ENCODE measurements at regions of chr5 and their contacts with region 1.

Region 1: GRCh38 chr5:43484106-43484849 is 613 bp upstream of the TMEM267 start:
- DNase-seq: peak; percentile 94
- ATAC-seq: peak; percentile 72
- H3K4me3 Mint-ChIP-seq: peak overlapping the region; percentile 97
- H3K27ac Mint-ChIP-seq: peak overlapping the region; percentile 100
- H3K4me1 Mint-ChIP-seq: peaks cover 38% of the 10 kb centered on the region
- H3K27me3 Mint-ChIP-seq: no peaks in the 10 kb centered on the region

Region 2: GRCh38 chr5:42927730-42928129 is 556.5 kb before region 1 on chr5:
- CTCF ChIA-PET with region 1: no interaction called
- POLR2A ChIA-PET with region 1: no interaction called
- DNase-seq: no peak
- ATAC-seq: no peak
- H3K4me3 Mint-ChIP-seq: no peak overlapping the region
- H3K27ac Mint-ChIP-seq: no peak overlapping the region
- H3K4me1 Mint-ChIP-seq: no peaks in the 10 kb centered on the region
- H3K27me3 Mint-ChIP-seq: no peaks in the 10 kb centered on the region

Region 3: DNA sequence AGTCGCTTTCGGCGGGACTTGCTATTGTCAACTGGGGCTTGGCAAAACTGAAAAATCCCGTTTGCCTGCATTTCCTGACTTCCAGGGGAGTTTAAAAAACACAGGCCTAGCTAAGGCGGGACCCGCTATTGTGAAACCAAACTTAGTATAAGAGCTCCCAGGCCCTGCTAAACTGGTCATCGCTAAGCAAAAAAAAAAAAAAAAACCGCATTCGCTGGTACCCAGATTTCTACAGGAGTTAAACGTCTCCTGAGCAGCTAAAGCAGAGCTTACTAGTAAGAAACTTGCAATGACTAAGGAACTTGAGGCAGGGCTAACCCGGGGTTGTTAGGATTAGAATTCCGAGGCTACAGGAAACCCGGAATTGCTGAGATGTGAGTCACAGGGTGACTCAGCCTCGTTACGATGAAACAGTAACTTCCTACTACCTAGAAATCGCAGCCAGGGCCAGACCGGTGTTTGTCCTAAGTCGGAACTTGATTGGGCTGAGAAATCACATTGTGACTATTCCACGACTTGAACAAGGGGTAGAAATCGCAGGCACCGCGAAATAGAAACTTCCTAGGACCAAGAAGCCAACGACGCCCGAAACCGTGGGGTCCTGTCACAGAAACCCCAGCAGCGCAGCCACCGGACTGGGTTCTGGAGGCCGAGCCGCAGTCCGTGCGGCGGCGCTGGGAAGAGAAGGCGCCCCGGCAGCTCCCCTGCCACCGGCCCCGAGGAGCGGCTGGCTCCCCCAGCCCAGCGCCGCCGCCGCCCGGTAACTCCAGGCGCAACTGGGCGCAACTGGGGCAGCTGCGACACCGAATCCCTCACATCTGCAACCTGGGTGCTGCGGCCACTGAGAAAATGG is 533.6 kb before region 1 on chr5:
- CTCF ChIA-PET with region 1: interaction called, 3 read pairs
- POLR2A ChIA-PET with region 1: interaction called, 16 read pairs
- DNase-seq: peak; percentile 73
- ATAC-seq: peak; percentile 38
- H3K4me3 Mint-ChIP-seq: peak overlapping the region; percentile 96
- H3K27ac Mint-ChIP-seq: peak overlapping the region; percentile 100
- H3K4me1 Mint-ChIP-seq: peaks cover 43% of the 10 kb centered on the region
- H3K27me3 Mint-ChIP-seq: no peaks in the 10 kb centered on the region

Region 4: GRCh38 chr5:43040287-43041098 is 443.8 kb before region 1 on chr5 and contains the start of gene ANXA2R:
- CTCF ChIA-PET with region 1: interaction called, 7 read pairs
- POLR2A ChIA-PET with region 1: interaction called, 31 read pairs
- DNase-seq: peak; percentile 97
- ATAC-seq: peak; percentile 49
- H3K4me3 Mint-ChIP-seq: peak within 1 kb of the TSS; percentile 93
- H3K27ac Mint-ChIP-seq: peak within 1 kb of the TSS; percentile 100
- H3K4me1 Mint-ChIP-seq: peaks cover 39% of the 10 kb centered on the region
- H3K27me3 Mint-ChIP-seq: no peaks in the 10 kb centered on the region
- total RNA-seq, gene ANXA2R: 28.0 to 29.3 TPM

Region 5: DNA sequence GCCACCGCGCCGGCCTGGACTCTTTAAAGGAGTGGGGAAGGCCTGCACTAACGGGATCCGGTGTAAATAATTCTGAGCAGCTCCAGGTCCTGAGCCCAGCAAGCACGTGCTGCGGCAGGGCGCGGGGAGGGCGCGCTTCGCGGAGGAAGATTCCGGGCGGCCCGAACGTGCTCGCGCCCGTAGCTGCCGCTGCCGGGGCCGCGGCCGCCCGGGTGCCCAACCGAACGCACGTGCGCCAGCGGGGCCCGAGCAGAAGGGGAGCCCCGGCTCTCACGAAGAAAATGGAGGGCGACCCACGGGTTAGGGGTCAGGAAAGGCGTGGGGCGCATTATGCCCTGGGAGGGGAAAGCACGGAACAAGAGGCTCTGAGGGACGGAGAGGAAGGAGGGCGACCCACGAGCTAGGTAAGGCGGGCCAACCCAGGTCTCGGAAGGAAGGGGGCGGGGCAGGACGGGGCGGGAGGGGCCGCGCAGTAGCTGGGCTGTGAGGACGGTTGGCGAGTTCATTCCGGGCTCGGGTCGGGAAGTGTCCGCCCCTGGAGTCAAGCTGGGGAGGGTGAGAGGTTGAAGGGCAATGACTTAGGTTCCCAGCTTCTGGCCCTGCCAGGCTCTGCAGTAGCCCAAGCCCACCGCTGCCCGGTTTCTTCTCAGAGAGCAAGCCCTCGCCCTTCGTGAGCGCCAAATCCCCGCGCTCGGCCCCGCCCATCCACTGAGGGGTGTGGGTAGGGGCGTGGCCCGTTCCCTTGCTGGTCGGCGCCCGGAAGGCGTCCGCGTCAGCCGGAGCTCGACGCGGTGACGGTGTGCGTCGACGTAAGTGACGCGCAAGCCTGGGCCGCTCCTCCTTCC is 363.3 kb before region 1 on chr5 and contains the start of gene ZNF131:
- CTCF ChIA-PET with region 1: interaction called, 27 read pairs
- POLR2A ChIA-PET with region 1: interaction called, 27 read pairs
- DNase-seq: peak; percentile 97
- ATAC-seq: peak; percentile 87
- H3K4me3 Mint-ChIP-seq: peak within 1 kb of the TSS; percentile 85
- H3K27ac Mint-ChIP-seq: peak within 1 kb of the TSS; percentile 94
- H3K4me1 Mint-ChIP-seq: peaks cover 37% of the 10 kb centered on the region
- H3K27me3 Mint-ChIP-seq: peaks cover 4% of the 10 kb centered on the region
- total RNA-seq, gene ZNF131: 45.8 to 52.8 TPM

Region 6: GRCh38 chr5:43313035-43313853 is 171.0 kb before region 1 on chr5 and contains the start of gene HMGCS1:
- CTCF ChIA-PET with region 1: interaction called, 30 read pairs
- POLR2A ChIA-PET with region 1: interaction called, 54 read pairs
- DNase-seq: peak; percentile 99
- ATAC-seq: peak; percentile 94
- H3K4me3 Mint-ChIP-seq: peak within 1 kb of the TSS; percentile 96
- H3K27ac Mint-ChIP-seq: peak within 1 kb of the TSS; percentile 95
- H3K4me1 Mint-ChIP-seq: peaks cover 62% of the 10 kb centered on the region
- H3K27me3 Mint-ChIP-seq: no peaks in the 10 kb centered on the region
- total RNA-seq, gene HMGCS1: 82.4 to 90.6 TPM

Region 7: DNA sequence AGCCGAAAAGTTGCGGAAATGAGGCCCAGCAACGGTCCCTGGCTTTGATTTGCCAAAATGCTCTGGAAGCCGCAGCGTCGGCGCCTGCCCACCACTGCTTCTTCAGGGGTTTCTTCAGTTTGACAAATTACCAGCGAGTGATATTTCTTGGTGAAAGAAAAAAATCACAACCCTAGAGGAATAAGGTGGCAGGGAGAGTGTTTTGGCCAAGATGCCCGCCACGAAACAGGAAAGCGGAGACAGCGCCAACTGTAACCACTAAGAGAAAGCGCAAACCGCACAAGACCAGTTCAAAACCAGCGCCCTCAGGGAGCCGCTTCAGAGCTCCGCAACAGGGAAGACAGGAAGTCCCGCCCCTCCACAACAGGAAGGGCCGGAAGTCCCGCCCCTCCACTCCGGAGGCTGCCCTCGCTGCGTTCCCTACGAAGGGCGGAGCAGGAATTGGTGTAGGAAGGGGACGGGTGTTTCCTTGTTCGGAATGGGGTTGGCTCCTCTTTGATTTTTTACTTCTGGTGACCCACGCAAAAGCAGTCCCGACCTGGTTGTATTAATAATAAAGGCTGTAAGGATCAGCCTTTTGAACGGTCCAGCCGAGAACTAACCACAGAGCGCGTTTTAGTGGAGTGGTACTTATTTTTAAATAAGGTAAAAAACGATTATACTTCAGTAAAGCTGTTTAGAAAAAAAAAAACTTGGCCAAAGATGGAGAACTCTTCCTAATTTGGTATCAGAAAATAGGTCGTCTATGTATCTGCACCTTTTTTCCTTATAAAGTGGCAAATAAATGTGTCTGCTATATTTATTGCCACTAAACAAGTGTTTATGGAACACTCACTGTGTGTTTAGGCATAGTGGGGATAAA is 30.8 kb after region 1 on chr5 and contains the start of gene C5orf34:
- CTCF ChIA-PET with region 1: interaction called, 26 read pairs
- POLR2A ChIA-PET with region 1: interaction called, 47 read pairs
- DNase-seq: peak; percentile 96
- ATAC-seq: peak; percentile 97
- H3K4me3 Mint-ChIP-seq: peak within 1 kb of the TSS; percentile 89
- H3K27ac Mint-ChIP-seq: peak within 1 kb of the TSS; percentile 96
- H3K4me1 Mint-ChIP-seq: peaks cover 28% of the 10 kb centered on the region
- H3K27me3 Mint-ChIP-seq: no peaks in the 10 kb centered on the region
- total RNA-seq, gene C5orf34: 7.7 to 10.3 TPM

Measured in activated CD8-positive, alpha-beta T cell treated with anti-CD3 and anti-CD28 coated beads, Interleukin-2, amount 10 ng/mL, durations not matched to agents 7 days and 5 days (primary cell).